Gastrocnemius medialis (tissue), 4 donors: ENCODE measurements at regions of chr15 and their contacts with region 1.

Region 1: GRCh38 chr15:75836953-75837321 is 6.3 kb upstream of the UBE2Q2 start:
- DNase-seq: no peak
- ATAC-seq: peak in 1 of 2 donors; percentile 53
- H3K4me3 ChIP-seq: no peak overlapping the region
- H3K27ac ChIP-seq: no peak overlapping the region
- H3K4me1 ChIP-seq: peaks cover 0 to 5% of the 10 kb centered on the region in 2 donors
- H3K27me3 ChIP-seq: no peaks in the 10 kb centered on the region
- CTCF ChIP-seq: no peak
- POLR2A ChIP-seq: no peak

Region 2: DNA sequence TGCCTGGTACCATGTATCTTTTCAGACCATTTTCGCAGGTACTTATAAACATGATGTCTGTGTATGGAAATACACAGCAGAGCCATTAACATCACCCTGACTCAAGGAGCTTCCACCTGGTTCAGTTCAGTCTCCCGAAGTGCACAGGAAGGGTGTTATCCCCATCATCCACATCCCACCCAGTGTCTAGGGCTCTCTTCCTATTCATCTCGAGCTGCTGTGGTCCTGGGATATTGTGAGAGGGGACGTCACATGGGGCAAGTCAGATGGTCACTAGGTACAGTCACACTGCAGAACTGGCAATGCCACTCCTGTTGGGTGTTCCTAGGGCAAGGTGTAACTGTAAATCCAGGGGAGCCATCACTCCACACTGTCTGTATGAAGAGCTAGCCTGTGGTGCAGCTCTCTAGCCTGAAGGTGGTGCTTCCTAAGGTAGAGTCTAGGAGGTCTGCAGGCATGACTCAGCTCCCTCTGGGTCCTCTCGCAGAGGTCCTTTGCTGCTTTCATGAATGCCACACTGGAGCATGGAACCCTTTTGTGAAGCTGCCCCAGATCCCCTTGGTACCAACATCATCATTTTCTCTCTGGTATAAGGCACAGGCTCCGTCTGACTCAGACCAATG is 1692.7 kb before region 1 on chr15:
- in situ Hi-C with region 1: no loop called
- intact Hi-C with region 1: loop called (anchors 10 kb)
- DNase-seq: no peak
- ATAC-seq: no peak
- H3K4me3 ChIP-seq: no peak overlapping the region
- H3K27ac ChIP-seq: no peak overlapping the region
- H3K4me1 ChIP-seq: no peaks in the 10 kb centered on the region
- H3K27me3 ChIP-seq: peaks cover 0 to 14% (median 6%) of the 10 kb centered on the region in 3 donors
- CTCF ChIP-seq: no peak
- POLR2A ChIP-seq: no peak